Posterior cingulate gyrus (tissue), 11 donors: ENCODE measurements at regions of chr3 and their contacts with region 1.

Region 1: DNA sequence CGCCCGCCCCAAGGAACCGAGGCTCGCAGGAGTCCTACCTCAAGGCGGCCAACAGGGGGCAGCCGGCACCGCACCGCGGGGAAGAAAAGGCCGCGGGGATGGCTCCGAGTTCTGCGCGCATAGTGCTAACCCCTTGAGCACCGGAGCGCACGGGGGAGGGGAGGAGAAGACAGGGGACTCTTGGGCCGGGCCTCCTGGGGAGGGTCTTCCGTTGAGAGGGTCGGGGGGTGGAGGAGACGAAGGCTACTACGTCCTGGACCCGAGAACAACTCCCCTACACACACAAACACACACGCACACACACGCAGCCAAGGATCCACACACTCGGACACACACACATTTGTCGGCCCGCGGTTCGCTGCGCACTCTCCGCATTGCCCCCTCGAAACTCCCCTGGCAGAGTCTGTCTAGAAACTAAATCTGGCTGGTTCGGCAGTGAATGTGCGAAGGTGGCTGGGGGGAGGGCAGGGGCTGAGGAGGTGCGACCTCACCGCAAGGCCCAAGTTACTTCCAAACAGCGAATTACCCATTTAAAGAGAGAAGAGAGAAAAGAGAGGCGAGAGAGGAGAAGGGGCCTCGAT is 1.8 kb downstream of the WNT5A start:
- DNase-seq: peak; percentile 68 to 97 (median 79)

Region 2: DNA sequence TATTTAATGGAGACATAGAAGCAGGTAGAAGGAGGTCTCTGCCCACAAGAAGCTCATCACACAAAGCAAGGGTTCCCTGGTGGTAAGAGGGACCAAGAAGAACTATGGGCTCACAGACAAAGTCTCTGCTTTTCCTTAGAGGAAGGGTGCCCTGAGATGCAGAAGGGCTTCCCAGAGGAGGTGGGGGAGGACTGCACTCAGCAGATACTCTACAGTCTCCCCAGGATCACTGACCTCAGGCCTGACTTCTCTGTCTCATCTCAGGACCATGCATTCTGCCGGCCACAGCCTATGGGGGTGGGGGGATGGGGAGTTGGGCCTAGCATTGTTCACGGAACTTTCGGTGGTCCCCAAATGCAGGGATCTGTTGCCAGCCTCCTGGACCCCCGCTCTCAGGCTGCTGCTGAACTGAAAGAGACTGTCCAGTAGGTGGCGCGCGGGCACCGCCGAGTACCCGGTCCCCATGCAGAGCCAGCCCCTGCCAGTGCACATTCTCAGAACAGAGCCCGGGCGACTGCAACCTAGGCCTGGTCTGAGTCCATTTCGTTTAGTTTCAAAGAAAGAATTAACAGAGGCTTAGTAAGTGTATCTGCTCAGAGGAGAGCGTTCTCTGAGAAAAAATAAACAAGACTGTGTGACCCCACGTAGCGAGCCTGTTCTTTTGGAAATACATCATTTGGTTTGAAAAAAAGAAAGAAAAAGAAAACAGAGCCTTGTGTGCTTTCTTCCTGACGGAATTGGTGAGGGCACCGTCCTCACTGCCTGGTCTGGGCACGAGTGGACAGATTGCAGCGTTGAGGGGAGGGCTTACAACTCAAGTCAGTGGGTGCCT is 631.5 kb before region 1 on chr3:
- intact Hi-C with region 1: loop called (anchors 10 kb)
- DNase-seq: peak; percentile 77 to 98 (median 89)

Region 3: DNA sequence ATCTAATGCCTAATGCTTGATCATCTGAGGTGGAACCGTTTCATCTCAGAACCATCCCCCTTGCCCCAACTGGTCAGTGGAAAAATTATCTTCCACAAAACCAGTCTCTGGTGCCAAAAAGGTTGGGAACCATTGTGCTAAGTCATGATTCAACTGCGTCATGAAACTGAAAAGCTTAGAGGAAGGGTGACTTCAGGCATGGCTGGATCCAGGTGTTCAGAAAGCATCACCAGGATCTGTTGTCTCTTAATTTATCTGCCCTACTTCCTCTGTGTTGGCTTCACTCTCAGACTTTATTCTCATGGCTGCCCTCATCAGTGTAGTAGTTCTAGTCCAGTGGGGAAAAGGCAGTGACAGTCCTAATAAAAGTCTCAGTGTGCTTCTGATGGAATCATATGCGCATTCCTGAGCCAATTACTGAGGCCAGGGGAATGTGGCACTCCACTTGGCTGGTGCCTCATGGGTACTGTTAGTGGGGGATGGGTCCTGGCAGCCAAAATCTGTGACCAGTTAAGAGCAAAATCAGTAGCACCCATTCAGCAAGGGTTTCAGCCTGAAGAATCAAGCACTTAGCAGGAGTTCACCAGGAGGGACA is 108.5 kb before region 1 on chr3:
- intact Hi-C with region 1: no loop called
- DNase-seq: no peak

Region 4: DNA sequence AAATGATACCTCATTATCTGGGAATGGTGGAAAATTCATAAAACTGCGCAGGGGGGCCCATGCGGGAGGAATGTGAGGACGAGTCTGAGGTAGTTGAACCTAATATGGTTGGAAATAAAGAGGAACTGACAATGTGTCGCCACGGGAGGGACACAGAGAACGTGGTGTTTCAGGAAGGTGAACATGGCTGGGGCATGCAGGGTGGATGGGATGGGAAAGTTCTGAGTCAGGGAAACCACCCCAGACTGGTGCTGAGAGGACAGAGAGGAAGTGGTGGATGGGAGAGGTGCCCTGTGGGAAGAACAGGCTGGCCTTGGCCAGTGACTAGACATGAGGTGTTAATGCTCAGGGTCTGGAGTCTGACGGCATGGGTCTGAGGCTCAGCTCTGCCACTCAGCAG is 138.9 kb after region 1 on chr3:
- intact Hi-C with region 1: no loop called
- DNase-seq: peak in 5 of 10 donors; percentile 11 to 82 (median 30)

Region 5: GRCh38 chr3:55746808-55747413 is 261.6 kb after region 1 on chr3:
- intact Hi-C with region 1: loop called (anchors 2 kb)
- DNase-seq: no peak

Region 6: GRCh38 chr3:56042326-56042951 is 557.1 kb after region 1 on chr3:
- intact Hi-C with region 1: loop called (anchors 1 kb)
- DNase-seq: no peak

Region 7: GRCh38 chr3:56251343-56251945 is 766.1 kb after region 1 on chr3:
- intact Hi-C with region 1: loop called (anchors 2 kb)
- DNase-seq: peak in 3 of 10 donors; percentile 18 to 37 (median 20)

Region 8: GRCh38 chr3:56556908-56557830 is 1071.9 kb after region 1 on chr3 and contains the start of gene CCDC66:
- intact Hi-C with region 1: loop called (anchors 10 kb)
- DNase-seq: peak; percentile 90 to 99 (median 95)